ENCODE measurements at regions of chr11 and their contacts with region 1.

Region 1: GRCh38 chr11:119205574-119206510 is at the start of gene CBL:
- H3K4me3 ChIP-seq: peak within 1 kb of the TSS; percentile 68
- H3K27ac ChIP-seq: peak within 1 kb of the TSS; percentile 87
- H3K4me1 ChIP-seq: peaks cover 10% of the 10 kb centered on the region; the same call in 1 of the 2 replicates
- CTCF ChIP-seq: peak; percentile 73

Region 2: GRCh38 chr11:119126675-119127268 is 79.1 kb before region 1 on chr11:
- CTCF ChIA-PET with region 1: no interaction called
- POLR2A ChIA-PET with region 1: no interaction called
- H3K4me3 ChIP-seq: no peak overlapping the region
- H3K27ac ChIP-seq: no peak overlapping the region
- H3K4me1 ChIP-seq: peaks cover 4% of the 10 kb centered on the region; the same call in 1 of the 2 replicates
- CTCF ChIP-seq: no peak

Region 3: GRCh38 chr11:119315131-119316015 is 109.5 kb after region 1 on chr11:
- CTCF ChIA-PET with region 1: interaction called, 4 read pairs
- POLR2A ChIA-PET with region 1: interaction called, 19 read pairs
- H3K4me3 ChIP-seq: peak overlapping the region; percentile 67
- H3K27ac ChIP-seq: no peak overlapping the region
- H3K4me1 ChIP-seq: no peaks in the 10 kb centered on the region
- CTCF ChIP-seq: no peak

Measured in HEK293 (cell line).